MCF 10A (cell line): ENCODE measurements at regions of chr3 and their contacts with region 1.

Region 1: DNA sequence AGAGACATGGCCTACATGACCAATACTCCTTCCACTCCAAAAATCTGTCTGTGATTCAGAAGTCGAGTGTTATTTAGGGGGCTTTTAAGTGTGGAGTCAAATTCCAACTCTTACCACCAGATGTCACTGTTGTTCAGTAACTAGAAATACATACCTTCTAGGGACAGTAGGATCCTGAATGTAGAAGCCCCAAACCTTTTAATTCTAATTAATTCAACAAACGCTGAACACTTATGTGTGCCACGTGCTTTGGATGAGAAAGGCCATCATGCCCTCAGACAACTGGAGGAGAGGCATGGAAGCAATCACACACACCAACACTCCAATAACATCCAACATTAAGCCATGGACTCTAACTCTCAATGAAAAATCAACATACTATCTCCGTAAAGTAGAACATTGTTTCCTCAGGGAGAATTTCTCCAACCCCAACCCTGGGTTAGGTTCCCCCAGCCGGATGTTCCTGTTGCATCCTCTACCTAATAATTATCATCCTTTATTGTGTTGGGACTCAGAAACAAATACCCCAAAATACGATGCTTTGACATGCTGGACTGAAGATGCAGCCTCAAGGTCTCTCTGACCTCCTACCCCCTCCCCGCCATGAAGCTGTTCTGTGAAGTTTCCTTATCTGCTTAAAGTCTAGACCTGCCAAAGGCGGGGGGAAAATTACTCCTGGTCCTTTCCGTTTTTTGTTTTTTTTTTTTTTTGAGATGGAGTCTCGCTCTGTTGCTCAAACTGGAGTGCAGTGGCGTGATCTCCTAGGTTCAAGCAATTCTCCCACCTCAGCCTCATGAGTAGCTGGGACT is 8.0 kb upstream of the CCDC13 start:
- DNase-seq: peak; percentile 72
- H3K4me3 Mint-ChIP-seq: no peak overlapping the region
- H3K27ac Mint-ChIP-seq: peak overlapping the region; percentile 97
- H3K4me1 Mint-ChIP-seq: peaks cover 42% of the 10 kb centered on the region
- H3K27me3 Mint-ChIP-seq: no peaks in the 10 kb centered on the region
- CTCF ChIP-seq: peak; percentile 72

Region 2: GRCh38 chr3:42795621-42796181 is 14.6 kb after region 1 on chr3:
- CTCF ChIA-PET with region 1: interaction called, 18 read pairs
- POLR2A ChIA-PET with region 1: interaction called, 51 read pairs
- intact Hi-C with region 1: no loop called
- DNase-seq: no peak
- H3K4me3 Mint-ChIP-seq: no peak overlapping the region
- H3K27ac Mint-ChIP-seq: no peak overlapping the region
- H3K4me1 Mint-ChIP-seq: peaks cover 9% of the 10 kb centered on the region
- H3K27me3 Mint-ChIP-seq: no peaks in the 10 kb centered on the region
- CTCF ChIP-seq: no peak

Region 3: GRCh38 chr3:42819351-42819965 is 38.4 kb after region 1 on chr3:
- CTCF ChIA-PET with region 1: interaction called, 10 read pairs
- POLR2A ChIA-PET with region 1: interaction called, 30 read pairs
- intact Hi-C with region 1: no loop called
- DNase-seq: peak; percentile 58
- H3K4me3 Mint-ChIP-seq: no peak overlapping the region
- H3K27ac Mint-ChIP-seq: no peak overlapping the region
- H3K4me1 Mint-ChIP-seq: peaks cover 38% of the 10 kb centered on the region
- H3K27me3 Mint-ChIP-seq: no peaks in the 10 kb centered on the region
- CTCF ChIP-seq: no peak

Region 4: DNA sequence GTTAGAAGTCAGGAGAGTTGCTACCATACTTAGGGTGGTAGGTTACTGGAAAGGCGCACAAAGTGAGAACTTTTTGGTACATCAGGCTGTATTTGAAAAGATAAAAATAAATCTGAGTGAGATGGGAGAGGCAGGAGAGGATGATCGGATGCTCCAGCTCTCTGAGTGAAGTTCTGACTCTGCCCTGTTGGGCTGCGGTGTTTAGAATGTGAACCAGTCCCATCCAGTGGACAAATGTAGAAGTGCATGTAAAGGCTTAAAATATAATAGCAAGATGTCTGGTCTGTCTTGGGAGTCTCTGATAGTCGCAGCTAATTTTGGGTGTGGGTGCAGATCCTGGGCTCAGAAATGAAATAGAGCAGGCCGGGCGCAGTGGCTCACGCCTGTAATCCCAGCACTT is 58.5 kb after region 1 on chr3:
- CTCF ChIA-PET with region 1: interaction called, 57 read pairs
- POLR2A ChIA-PET with region 1: interaction called, 16 read pairs
- intact Hi-C with region 1: loop called (anchors 1 kb)
- DNase-seq: peak; percentile 69
- H3K4me3 Mint-ChIP-seq: no peak overlapping the region
- H3K27ac Mint-ChIP-seq: no peak overlapping the region
- H3K4me1 Mint-ChIP-seq: no peaks in the 10 kb centered on the region
- H3K27me3 Mint-ChIP-seq: no peaks in the 10 kb centered on the region
- CTCF ChIP-seq: peak; percentile 77

Region 5: GRCh38 chr3:42880601-42881451 is 99.7 kb after region 1 on chr3:
- CTCF ChIA-PET with region 1: interaction called, 15 read pairs
- POLR2A ChIA-PET with region 1: no interaction called
- intact Hi-C with region 1: loop called (anchors 1 kb)
- DNase-seq: peak; percentile 74
- H3K4me3 Mint-ChIP-seq: peak overlapping the region; percentile 63
- H3K27ac Mint-ChIP-seq: peak overlapping the region; percentile 21
- H3K4me1 Mint-ChIP-seq: peaks cover 6% of the 10 kb centered on the region
- H3K27me3 Mint-ChIP-seq: peaks cover 12% of the 10 kb centered on the region
- CTCF ChIP-seq: peak; percentile 88

Region 6: DNA sequence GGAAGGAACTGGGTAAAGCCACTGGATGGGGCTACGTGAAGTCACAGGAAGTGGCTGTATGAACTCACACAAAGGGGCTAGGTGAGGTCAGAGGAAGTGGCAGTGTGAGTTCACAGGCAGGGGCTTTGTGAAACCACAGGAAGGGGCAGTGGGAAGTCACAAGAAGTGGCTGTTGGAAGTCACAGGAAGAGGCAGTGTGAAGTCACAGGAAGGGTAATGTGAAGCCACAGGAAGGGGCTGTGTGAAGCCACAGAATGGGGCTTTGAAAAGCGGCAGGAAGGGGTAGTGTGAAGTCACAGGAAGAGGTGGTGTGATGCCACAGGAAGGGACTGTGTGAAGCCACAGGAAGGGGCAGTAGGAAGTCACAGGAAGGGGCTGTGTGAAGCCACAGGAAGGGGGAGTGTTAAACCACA is 232.7 kb after region 1 on chr3:
- CTCF ChIA-PET with region 1: no interaction called
- POLR2A ChIA-PET with region 1: no interaction called
- intact Hi-C with region 1: no loop called
- DNase-seq: no peak
- H3K4me3 Mint-ChIP-seq: no peak overlapping the region
- H3K27ac Mint-ChIP-seq: no peak overlapping the region
- H3K4me1 Mint-ChIP-seq: no peaks in the 10 kb centered on the region
- H3K27me3 Mint-ChIP-seq: no peaks in the 10 kb centered on the region
- CTCF ChIP-seq: no peak

Region 7: DNA sequence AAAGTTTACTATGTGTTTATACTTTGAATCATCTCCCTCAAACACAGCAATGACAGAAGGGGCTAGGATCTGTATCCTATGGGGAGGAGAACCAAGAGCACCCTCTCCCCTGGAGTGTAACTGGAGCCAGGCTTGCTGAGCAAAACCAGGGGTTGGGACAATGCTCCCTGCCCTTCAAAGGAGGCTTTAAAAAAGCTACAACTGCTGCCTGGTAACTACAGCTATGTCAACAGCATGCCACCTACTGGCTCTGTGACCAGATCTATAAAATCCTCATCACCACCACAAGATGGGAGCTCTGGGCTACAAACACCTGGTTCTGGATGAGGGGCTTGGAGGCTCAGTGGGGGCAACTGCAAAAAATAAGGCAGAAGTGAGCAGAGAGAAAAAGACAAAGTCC is 778.9 kb after region 1 on chr3:
- CTCF ChIA-PET with region 1: no interaction called
- POLR2A ChIA-PET with region 1: no interaction called
- intact Hi-C with region 1: no loop called
- DNase-seq: no peak
- H3K4me3 Mint-ChIP-seq: no peak overlapping the region
- H3K27ac Mint-ChIP-seq: no peak overlapping the region
- H3K4me1 Mint-ChIP-seq: no peaks in the 10 kb centered on the region
- H3K27me3 Mint-ChIP-seq: no peaks in the 10 kb centered on the region
- CTCF ChIP-seq: no peak